ENCODE measurements at regions of chr1 and their contacts with region 1.

Region 1: DNA sequence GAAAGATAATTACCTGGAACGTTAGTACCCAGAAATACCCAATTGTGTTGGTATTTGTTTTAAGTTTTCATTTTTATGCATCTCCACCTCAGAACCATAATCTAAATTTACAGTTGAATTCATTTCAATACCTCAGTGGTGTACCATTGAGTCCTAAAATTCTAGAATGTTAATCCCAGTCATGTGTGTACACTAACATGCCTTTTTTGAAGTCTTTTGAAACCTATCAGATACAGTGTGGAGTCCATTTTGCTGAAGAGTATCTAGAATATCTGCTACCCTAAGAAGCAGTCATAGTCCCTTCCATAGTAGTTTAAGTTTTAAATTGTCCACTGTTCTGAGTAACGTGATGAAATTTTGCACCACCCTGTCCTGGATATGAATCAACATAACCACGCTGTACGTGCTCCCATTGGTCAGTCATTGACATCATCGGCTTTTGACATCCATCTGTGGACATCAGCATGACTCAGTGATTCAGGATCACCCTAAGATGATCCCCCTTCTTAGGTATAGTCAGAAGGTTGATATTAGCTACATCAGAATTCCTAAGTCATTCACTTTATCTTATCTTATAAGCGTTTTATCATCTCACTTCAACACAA is 7.5 kb upstream of the ASH1L start:
- DNase-seq: no peak
- H3K4me3 ChIP-seq: no peak overlapping the region
- H3K27ac ChIP-seq: no peak overlapping the region
- H3K27me3 ChIP-seq: no peaks in the 10 kb centered on the region
- CTCF ChIP-seq: no peak

Region 2: GRCh38 chr1:155392898-155393411 is 177.1 kb before region 1 on chr1:
- intact Hi-C with region 1: no loop called
- DNase-seq: no peak
- H3K4me3 ChIP-seq: no peak overlapping the region
- H3K27ac ChIP-seq: peak overlapping the region in 53 of 59 donors; percentile 2 to 80 (median 55)
- H3K27me3 ChIP-seq: no peaks in the 10 kb centered on the region
- CTCF ChIP-seq: no peak

Region 3: DNA sequence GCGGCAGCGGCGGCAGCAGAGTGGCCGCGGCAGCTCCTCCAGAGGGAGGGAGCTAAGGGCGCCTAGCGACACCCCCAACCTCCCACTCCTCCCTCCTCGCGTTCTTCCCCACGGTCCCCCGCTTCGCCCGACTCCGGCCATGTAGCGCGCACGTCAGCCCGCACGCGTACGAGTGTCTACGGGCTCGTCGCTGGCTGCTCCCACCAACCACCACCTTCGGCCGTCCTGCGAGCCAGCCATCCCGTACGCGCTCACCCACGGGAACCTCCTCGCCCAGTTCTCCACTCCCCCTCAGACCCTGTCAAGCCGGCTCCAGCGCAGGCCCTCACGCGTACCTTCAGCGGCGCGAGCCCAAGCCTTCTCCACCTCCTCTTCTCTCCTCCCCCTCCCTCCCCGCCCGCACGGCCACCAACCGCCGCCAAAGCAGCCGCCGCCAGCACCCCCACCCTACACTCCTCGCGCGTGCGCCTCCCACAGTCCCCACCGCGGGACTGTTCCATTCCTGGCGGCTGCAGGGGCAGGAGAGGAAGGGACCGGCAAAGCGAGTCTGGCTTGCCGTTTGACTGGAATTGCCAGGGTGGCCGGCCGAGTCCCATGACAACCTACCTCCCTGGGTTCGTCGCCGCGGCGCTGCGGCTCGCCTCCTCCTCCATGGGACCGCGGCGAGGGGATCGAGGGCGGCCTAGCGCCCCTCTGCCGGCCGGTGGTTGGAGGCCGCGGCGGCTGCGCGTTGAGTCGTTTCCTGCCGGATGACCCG is 118.4 kb after region 1 on chr1 and contains the start of gene YY1AP1:
- intact Hi-C with region 1: loop called in 1 of 2 experiments (anchors 10 kb)
- DNase-seq: peak; percentile 78 to 93 (median 88)
- H3K4me3 ChIP-seq: peak within 1 kb of the TSS; percentile 57 to 99 (median 94)
- H3K27ac ChIP-seq: peak within 1 kb of the TSS; percentile 92 to 100 (median 99)
- H3K27me3 ChIP-seq: no peaks in the 10 kb centered on the region
- CTCF ChIP-seq: peak in 11 of 56 donors; percentile 4 to 37 (median 17)
- total RNA-seq, gene YY1AP1: 78.5 to 226 (median 131) TPM

Region 4: DNA sequence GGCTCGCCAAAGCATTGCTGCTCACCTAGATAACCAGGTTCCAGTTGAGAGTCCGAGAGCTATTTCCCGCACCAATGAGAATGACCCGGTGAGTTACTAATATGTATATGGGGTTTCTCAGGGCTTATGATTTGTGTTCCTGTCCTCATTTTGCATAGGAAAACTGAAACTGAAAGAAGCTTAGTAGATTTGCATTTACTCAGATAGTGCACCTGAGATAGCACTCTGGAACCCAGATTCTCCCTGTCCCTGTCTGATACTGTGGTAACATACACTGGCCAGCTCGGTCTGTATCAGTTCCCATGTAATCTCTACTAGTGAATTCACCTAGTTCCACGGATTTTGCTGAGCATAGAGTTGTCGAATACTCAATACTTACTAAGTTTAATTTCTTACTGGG is 147.0 kb after region 1 on chr1:
- intact Hi-C with region 1: no loop called
- DNase-seq: no peak
- H3K4me3 ChIP-seq: no peak overlapping the region
- H3K27ac ChIP-seq: peak overlapping the region in 21 of 59 donors; percentile 37 to 99 (median 91)
- H3K27me3 ChIP-seq: no peaks in the 10 kb centered on the region
- CTCF ChIP-seq: no peak

Region 5: GRCh38 chr1:155844860-155845421 is 274.9 kb after region 1 on chr1:
- intact Hi-C with region 1: no loop called
- DNase-seq: no peak
- H3K4me3 ChIP-seq: no peak overlapping the region
- H3K27ac ChIP-seq: peak overlapping the region in 2 of 59 donors; percentile 11 to 23
- H3K27me3 ChIP-seq: no peaks in the 10 kb centered on the region
- CTCF ChIP-seq: no peak

Measured in dorsolateral prefrontal cortex (tissue), 120 donors.